ENCODE measurements at regions of chr7 and their contacts with region 1.

Region 1: GRCh38 chr7:26365077-26365900 is 73.6 kb downstream of the SNX10 start:
- DNase-seq: peak in 1 of 2 donors; percentile 71
- H3K4me3 ChIP-seq: no peak overlapping the region
- H3K27ac ChIP-seq: no peak overlapping the region
- H3K4me1 ChIP-seq: no peaks in the 10 kb centered on the region
- H3K27me3 ChIP-seq: no peaks in the 10 kb centered on the region
- CTCF ChIP-seq: peak; percentile 64 to 73 (median 72)

Region 2: GRCh38 chr7:25389489-25390106 is 975.7 kb before region 1 on chr7:
- intact Hi-C with region 1: loop called (anchors 10 kb)
- DNase-seq: no peak
- H3K4me3 ChIP-seq: no peak overlapping the region
- H3K27ac ChIP-seq: no peak overlapping the region
- H3K4me1 ChIP-seq: peaks cover 0 to 8% of the 10 kb centered on the region in 2 donors
- H3K27me3 ChIP-seq: no peaks in the 10 kb centered on the region
- CTCF ChIP-seq: peak in 1 of 3 experiments; percentile 49

Region 3: DNA sequence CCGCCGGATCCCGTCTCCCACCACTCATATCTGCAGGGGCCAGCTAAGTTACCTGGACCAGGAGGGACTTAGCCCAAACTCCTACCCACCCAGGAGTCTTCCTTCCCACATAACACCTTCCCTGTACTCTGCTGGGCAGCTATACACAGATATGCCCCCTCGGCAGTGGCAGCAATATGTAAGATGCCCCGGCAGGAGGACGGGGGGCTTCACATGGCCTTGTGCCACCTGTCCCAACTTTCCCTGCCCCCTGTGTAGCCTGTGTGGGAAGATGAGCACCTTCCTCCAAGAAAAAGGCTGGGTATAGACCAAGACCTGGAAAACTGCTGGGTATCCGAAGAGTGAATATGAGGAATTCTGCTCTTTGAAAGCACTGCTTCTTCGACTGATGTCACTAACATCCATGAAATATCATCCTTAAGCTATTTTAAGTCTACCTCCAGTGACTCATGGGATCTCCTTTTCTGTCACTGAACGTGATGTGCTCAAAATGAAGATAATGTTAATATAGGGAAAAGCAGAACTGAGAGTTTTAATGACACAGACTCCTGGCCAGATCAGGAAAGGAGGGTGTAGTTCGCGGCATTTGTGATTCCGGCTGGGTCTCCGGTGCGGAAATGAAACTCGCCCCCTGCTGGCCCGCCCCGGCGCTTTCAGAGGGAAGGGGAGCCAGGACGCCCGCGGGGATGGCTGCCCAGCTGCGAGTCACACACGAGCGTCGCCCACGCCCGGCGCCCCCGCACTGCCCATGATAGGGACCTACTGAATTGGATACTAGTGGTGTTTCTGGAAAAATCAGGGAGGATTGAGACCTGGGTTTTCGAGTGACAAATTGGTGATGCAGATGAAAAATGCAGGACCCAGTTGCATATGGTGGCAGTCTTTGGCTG is 470.1 kb before region 1 on chr7:
- intact Hi-C with region 1: loop called (anchors 1 kb)
- DNase-seq: peak in 1 of 2 donors; percentile 84
- H3K4me3 ChIP-seq: peak overlapping the region in 1 of 2 donors; percentile 29
- H3K27ac ChIP-seq: no peak overlapping the region
- H3K4me1 ChIP-seq: no peaks in the 10 kb centered on the region
- H3K27me3 ChIP-seq: peaks cover 7% of the 10 kb centered on the region
- CTCF ChIP-seq: peak; percentile 13 to 64 (median 59)

Region 4: DNA sequence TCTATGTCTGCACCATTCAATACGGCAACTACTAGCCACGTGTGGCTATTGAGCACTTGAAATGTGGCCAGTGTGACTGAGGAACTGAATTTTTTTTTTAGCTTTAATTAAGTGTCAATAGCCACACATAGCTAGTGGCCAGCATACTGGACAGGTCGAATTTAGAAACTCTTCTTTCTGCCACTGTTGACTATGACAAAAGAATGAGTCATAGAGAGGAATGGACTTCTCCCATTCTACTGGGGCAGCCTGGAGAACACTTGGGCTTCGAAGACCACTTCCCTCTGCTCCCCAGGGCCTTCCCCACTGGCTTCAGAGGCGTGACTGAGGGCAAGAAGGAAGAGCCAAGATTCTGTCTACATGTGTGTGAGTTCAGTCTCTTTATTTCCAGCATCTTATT is 63.9 kb after region 1 on chr7:
- intact Hi-C with region 1: no loop called
- DNase-seq: no peak
- H3K4me3 ChIP-seq: no peak overlapping the region
- H3K27ac ChIP-seq: no peak overlapping the region
- H3K4me1 ChIP-seq: no peaks in the 10 kb centered on the region
- H3K27me3 ChIP-seq: no peaks in the 10 kb centered on the region
- CTCF ChIP-seq: no peak

Region 5: DNA sequence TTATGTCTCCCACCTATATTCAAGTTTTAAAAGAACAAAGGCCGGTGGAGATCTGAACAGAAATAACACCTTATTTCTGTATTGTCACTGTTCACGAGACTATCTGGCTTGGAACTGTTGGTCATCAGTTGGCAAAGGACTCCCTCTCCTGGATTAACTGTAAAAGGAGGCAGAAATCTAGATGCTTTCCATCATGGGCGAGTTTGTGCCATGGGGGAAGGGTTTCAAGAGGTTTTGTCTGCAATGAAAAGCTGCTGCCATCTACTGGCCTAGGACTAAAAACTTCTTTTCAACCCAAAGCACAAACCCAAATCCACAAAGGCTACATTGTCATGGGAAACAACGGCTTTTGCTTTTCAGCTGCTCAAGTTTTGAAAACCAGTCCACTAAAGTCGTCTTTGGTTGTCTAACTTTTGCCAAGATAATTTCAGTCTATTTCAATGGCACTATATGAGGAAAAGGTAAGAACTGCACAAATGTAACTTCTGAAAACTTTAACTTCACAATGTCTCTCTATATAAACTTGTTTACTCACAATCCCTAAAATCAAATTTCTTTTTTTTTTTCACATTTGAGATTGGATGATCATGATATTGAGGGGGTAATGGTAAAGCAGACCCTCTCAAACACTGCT is 302.3 kb after region 1 on chr7:
- intact Hi-C with region 1: loop called (anchors 5 kb)
- DNase-seq: no peak
- H3K4me3 ChIP-seq: no peak overlapping the region
- H3K27ac ChIP-seq: no peak overlapping the region
- H3K4me1 ChIP-seq: no peaks in the 10 kb centered on the region
- H3K27me3 ChIP-seq: no peaks in the 10 kb centered on the region
- CTCF ChIP-seq: peak; percentile 45 to 68 (median 52)

Region 6: DNA sequence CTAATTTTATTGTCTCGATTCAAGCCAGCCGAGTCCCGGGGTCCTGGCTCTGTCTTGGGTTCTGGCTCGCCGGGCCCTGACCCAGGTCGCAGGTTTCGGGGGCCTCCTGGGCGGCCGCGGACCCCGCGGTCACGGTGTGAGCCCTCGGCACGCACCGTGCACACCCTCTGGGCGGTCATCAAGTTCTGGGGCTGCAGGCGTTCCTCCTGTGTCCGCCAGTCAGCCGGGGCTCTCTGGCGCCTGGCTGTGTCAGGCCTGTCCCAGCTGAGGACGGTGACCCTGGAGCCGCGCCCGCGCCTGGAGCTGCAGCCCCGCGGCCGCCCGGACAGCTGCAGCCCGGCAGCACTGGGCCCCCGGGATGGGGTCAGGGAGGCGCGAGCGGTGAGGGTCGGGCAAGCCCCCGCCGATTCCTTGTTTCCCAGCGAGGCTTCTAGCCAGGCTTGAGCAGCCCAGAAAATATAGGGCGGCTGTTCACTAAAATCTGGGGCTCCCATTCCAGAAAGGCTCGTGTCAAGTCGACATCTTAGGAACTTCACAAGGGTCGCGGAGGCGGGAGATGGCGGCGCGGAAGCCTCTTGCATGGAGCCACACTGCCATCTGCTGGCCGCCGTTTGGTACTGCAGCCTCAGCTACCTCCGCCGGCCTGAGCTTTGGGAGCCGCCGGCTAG is 795.4 kb after region 1 on chr7:
- intact Hi-C with region 1: loop called (anchors 1 kb)
- DNase-seq: peak in 1 of 2 donors; percentile 93
- H3K4me3 ChIP-seq: peak overlapping the region; percentile 47 to 72
- H3K27ac ChIP-seq: peak overlapping the region in 1 of 2 donors; percentile 51
- H3K4me1 ChIP-seq: no peaks in the 10 kb centered on the region
- H3K27me3 ChIP-seq: peaks cover 11% of the 10 kb centered on the region
- CTCF ChIP-seq: peak; percentile 97 to 100 (median 99)

Region 7: GRCh38 chr7:27303026-27303425 is 937.7 kb after region 1 on chr7:
- intact Hi-C with region 1: no loop called
- DNase-seq: no peak
- H3K4me3 ChIP-seq: no peak overlapping the region
- H3K27ac ChIP-seq: no peak overlapping the region
- H3K4me1 ChIP-seq: no peaks in the 10 kb centered on the region
- H3K27me3 ChIP-seq: no peaks in the 10 kb centered on the region
- CTCF ChIP-seq: no peak

Measured in ascending aorta (tissue), 2 donors.